ENCODE measurements at regions of chr3 and their contacts with region 1.

Region 1: GRCh38 chr3:193040836-193041672 is 123.4 kb upstream of the MB21D2 start:
- DNase-seq: peak; percentile 50
- ATAC-seq: peak; percentile 83
- H3K4me3 ChIP-seq: no peak overlapping the region
- H3K27ac ChIP-seq: no peak overlapping the region
- H3K4me1 ChIP-seq: no peaks in the 10 kb centered on the region
- H3K27me3 ChIP-seq: no peaks in the 10 kb centered on the region
- CTCF ChIP-seq: peak; percentile 38 to 71 (median 65); a peak in 5 of 6 replicates
- POLR2A ChIP-seq: no peak
- RAD21 ChIP-seq: peak; percentile 85

Region 2: DNA sequence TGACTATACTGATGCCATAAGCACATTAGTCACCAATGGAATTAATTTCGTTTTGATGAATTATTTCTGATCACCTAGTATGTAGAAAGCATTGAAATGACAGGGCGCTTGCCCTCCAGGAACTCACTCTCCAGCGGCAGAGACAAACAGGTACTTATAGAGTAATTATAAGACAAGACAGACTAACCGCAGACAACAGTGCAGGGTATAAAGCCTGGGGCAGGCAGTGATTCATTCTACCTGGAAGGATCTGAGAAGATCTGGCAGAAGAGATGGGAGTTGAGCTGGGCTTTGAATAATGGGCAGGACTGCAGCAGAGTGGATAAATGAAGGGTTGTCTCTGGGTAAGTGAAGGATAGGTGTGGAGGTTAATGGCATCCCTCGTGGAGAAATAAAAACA is 645.5 kb before region 1 on chr3:
- CTCF ChIA-PET with region 1: no interaction called
- POLR2A ChIA-PET with region 1: no interaction called
- RAD21 ChIA-PET with region 1: no interaction called
- intact Hi-C with region 1: no loop called
- DNase-seq: no peak
- ATAC-seq: no peak
- H3K4me3 ChIP-seq: no peak overlapping the region
- H3K27ac ChIP-seq: no peak overlapping the region
- H3K4me1 ChIP-seq: no peaks in the 10 kb centered on the region
- H3K27me3 ChIP-seq: peaks cover 23% of the 10 kb centered on the region
- CTCF ChIP-seq: no peak
- POLR2A ChIP-seq: no peak
- RAD21 ChIP-seq: no peak

Region 3: GRCh38 chr3:192467230-192468140 is 573.6 kb before region 1 on chr3:
- CTCF ChIA-PET with region 1: no interaction called
- POLR2A ChIA-PET with region 1: no interaction called
- RAD21 ChIA-PET with region 1: no interaction called
- intact Hi-C with region 1: loop called (anchors 10 kb)
- DNase-seq: peak; percentile 37
- ATAC-seq: peak; percentile 97
- H3K4me3 ChIP-seq: no peak overlapping the region
- H3K27ac ChIP-seq: no peak overlapping the region
- H3K4me1 ChIP-seq: no peaks in the 10 kb centered on the region
- H3K27me3 ChIP-seq: peaks cover 56% of the 10 kb centered on the region
- CTCF ChIP-seq: peak; percentile 61 to 94 (median 81)
- POLR2A ChIP-seq: no peak
- RAD21 ChIP-seq: peak; percentile 86

Region 4: GRCh38 chr3:192917404-192918274 is 123.4 kb before region 1 on chr3 and contains the start of gene MB21D2:
- CTCF ChIA-PET with region 1: no interaction called
- POLR2A ChIA-PET with region 1: interaction called, 4 read pairs
- RAD21 ChIA-PET with region 1: no interaction called
- intact Hi-C with region 1: loop called (anchors 5 kb)
- DNase-seq: peak; percentile 69
- ATAC-seq: peak; percentile 89
- H3K4me3 ChIP-seq: peak within 1 kb of the TSS; percentile 74 to 88
- H3K27ac ChIP-seq: peak within 1 kb of the TSS; percentile 58
- H3K4me1 ChIP-seq: peaks cover 0 to 19% of the 10 kb centered on the region in 2 experiments; a peak in 2 of 4 replicates
- H3K27me3 ChIP-seq: no peaks in the 10 kb centered on the region
- CTCF ChIP-seq: no peak
- POLR2A ChIP-seq: peak; percentile 82
- RAD21 ChIP-seq: no peak; the same call in 1 of the 2 replicates
- total RNA-seq, gene MB21D2: 2.8 TPM

Region 5: GRCh38 chr3:193068365-193068764 is 27.3 kb after region 1 on chr3:
- CTCF ChIA-PET with region 1: no interaction called
- POLR2A ChIA-PET with region 1: no interaction called
- RAD21 ChIA-PET with region 1: no interaction called
- intact Hi-C with region 1: no loop called
- DNase-seq: no peak
- ATAC-seq: no peak
- H3K4me3 ChIP-seq: no peak overlapping the region
- H3K27ac ChIP-seq: no peak overlapping the region
- H3K4me1 ChIP-seq: no peaks in the 10 kb centered on the region
- H3K27me3 ChIP-seq: peaks cover 18% of the 10 kb centered on the region
- CTCF ChIP-seq: no peak
- POLR2A ChIP-seq: no peak
- RAD21 ChIP-seq: no peak

Measured in HCT116 (cell line).